ENCODE measurements at regions of chr6 and their contacts with region 1.

Region 1: DNA sequence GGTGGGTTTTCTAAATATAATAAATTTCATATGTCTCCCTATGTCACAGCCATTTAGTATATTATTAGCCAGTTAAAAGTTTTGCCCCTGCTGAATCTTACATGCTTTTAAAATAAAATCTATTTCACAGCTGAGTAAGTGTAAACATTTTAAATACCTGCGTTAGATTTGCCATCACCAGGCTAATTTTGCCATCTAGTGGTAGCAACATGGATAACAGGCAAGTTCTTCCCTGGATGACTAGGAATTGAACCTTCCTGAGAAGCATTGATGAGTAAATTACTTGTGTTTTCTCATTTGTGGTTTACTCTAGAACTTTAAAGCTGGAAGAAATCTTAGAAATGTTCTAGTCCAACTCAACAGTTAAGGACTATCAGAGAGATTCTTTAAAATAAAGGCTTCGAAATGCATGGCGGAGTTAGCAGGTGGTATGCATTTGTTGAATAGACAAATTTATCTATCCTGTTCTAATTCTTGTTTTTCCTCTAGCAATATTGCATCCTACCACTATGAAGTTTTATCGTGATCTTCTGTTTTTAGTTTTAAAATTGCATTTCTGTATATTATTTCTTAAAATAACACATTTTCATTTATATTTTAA is 2.6 kb downstream of the PRSS35 start:
- DNase-seq: peak; percentile 50
- H3K4me3 ChIP-seq: no peak overlapping the region; a peak in 1 of 4 replicates
- H3K27ac ChIP-seq: no peak overlapping the region
- H3K4me1 ChIP-seq: peaks cover 4 to 11% of the 10 kb centered on the region in 2 experiments; a peak in 2 of 4 replicates
- H3K27me3 ChIP-seq: no peaks in the 10 kb centered on the region
- CTCF ChIP-seq: peak; percentile 93
- EP300 ChIP-seq: no peak
- RAD21 ChIP-seq: peak; percentile 96

Region 2: GRCh38 chr6:83215131-83216047 is 299.6 kb before region 1 on chr6:
- CTCF ChIA-PET with region 1: interaction called, 293 read pairs
- POLR2A ChIA-PET with region 1: no interaction called
- DNase-seq: peak; percentile 51
- H3K4me3 ChIP-seq: peak overlapping the region in 1 of 2 experiments; percentile 16; a peak in 1 of 4 replicates
- H3K27ac ChIP-seq: peak overlapping the region; percentile 64 to 72
- H3K4me1 ChIP-seq: peaks cover 6 to 9% of the 10 kb centered on the region in 2 experiments; a peak in 3 of 4 replicates
- H3K27me3 ChIP-seq: no peaks in the 10 kb centered on the region
- CTCF ChIP-seq: peak; percentile 95
- EP300 ChIP-seq: no peak
- RAD21 ChIP-seq: peak; percentile 88

Region 3: DNA sequence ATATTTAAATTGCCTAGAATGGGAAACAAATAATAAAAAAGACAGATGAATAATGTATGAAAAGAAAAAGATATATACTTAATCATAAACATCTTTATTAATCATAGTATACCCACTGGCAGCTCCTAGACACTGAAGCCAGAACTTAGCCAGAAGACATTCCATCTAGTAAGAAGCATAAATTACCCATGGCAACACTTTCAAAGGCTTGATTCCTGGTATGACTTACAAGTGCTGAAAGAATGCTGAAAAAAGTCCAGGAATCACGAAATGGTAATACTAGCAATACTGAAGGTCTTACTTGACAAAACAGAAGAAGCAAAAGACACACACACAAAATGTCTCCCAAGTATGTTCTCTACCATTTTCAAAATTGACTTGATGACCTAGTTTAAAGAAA is 283.8 kb before region 1 on chr6:
- CTCF ChIA-PET with region 1: interaction called, 17 read pairs
- POLR2A ChIA-PET with region 1: no interaction called
- DNase-seq: no peak
- H3K4me3 ChIP-seq: no peak overlapping the region
- H3K27ac ChIP-seq: no peak overlapping the region
- H3K4me1 ChIP-seq: no peaks in the 10 kb centered on the region; a peak in 1 of 4 replicates
- H3K27me3 ChIP-seq: no peaks in the 10 kb centered on the region
- CTCF ChIP-seq: no peak
- EP300 ChIP-seq: peak in 1 of 2 experiments; percentile 46; a peak in 1 of 4 replicates
- RAD21 ChIP-seq: no peak

Region 4: DNA sequence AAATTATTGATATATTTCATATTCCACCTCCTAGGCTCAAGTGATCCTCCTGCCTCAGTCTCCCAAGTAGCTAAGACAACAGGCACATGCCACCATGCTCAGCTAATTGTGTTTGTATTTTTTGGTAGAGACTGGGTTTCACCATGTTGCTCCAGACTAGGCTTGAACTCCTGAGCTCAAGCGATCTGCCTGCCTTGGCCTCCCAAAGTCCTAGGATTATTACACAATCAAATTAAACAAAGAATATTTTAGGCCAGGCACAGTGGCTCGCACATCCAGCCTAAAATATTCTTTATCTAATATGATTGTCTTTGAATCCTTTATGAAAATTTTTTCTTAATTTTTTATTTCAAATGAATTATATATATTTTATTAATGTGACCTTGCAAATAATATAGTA is 101.9 kb before region 1 on chr6:
- CTCF ChIA-PET with region 1: interaction called, 73 read pairs
- POLR2A ChIA-PET with region 1: no interaction called
- DNase-seq: no peak
- H3K4me3 ChIP-seq: no peak overlapping the region
- H3K27ac ChIP-seq: no peak overlapping the region
- H3K4me1 ChIP-seq: no peaks in the 10 kb centered on the region
- H3K27me3 ChIP-seq: no peaks in the 10 kb centered on the region
- CTCF ChIP-seq: no peak
- EP300 ChIP-seq: no peak
- RAD21 ChIP-seq: no peak

Measured in SK-N-SH (cell line).